ENCODE measurements at regions of chr6 and their contacts with region 1.

Region 1: GRCh38 chr6:11309947-11310665 is 77.6 kb upstream of the NEDD9 start:
- DNase-seq: no peak
- H3K4me3 ChIP-seq: no peak overlapping the region
- H3K4me3 Mint-ChIP-seq: no peak overlapping the region
- H3K27ac Mint-ChIP-seq: no peak overlapping the region
- H3K4me1 ChIP-seq: no peaks in the 10 kb centered on the region; the same call in 1 of the 2 replicates
- H3K4me1 Mint-ChIP-seq: no peaks in the 10 kb centered on the region
- H3K27me3 ChIP-seq: no peaks in the 10 kb centered on the region
- H3K27me3 Mint-ChIP-seq: no peaks in the 10 kb centered on the region
- CTCF ChIP-seq: no peak

Region 2: GRCh38 chr6:11335826-11336225 is 25.7 kb after region 1 on chr6:
- CTCF ChIA-PET with region 1: interaction called, 13 read pairs
- POLR2A ChIA-PET with region 1: no interaction called
- intact Hi-C with region 1: no loop called
- DNase-seq: no peak
- H3K4me3 ChIP-seq: no peak overlapping the region
- H3K4me3 Mint-ChIP-seq: no peak overlapping the region
- H3K27ac Mint-ChIP-seq: no peak overlapping the region
- H3K4me1 ChIP-seq: no peaks in the 10 kb centered on the region
- H3K4me1 Mint-ChIP-seq: peaks cover 8% of the 10 kb centered on the region
- H3K27me3 ChIP-seq: no peaks in the 10 kb centered on the region
- H3K27me3 Mint-ChIP-seq: no peaks in the 10 kb centered on the region
- CTCF ChIP-seq: no peak